AG04449 (cell line): ENCODE measurements at regions of chr11 and their contacts with region 1.

Region 1: DNA sequence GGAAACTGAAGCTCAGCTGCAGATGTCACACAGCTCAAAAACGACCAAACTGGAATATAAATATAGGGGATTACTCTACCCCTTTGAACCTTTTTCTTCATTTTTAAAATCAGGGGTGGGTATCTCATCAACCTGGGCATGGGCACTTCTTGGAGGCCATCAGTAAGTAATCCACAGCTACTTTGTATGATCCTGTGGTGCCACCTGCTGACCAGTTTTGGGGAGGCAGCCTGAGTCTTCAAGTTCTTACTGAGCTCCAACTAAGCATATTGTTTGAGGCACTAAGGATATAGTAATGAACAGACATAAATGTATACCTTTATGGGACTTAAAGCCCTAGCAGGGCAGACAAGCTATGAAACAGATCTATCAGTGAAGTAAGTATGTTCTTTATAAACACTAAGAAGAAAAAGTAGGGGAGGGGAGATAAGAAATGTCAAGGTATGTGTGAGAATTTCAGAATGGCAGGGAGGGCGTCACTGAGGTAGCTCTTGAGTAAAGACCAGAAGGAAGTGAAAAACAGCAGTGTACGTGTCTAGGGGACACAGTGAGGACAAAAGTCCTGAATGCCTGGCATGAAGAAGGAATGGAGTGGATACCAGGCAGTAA is 18.4 kb downstream of the TUB start:
- DNase-seq: peak; percentile 46
- H3K4me3 ChIP-seq: no peak overlapping the region
- CTCF ChIP-seq: peak; percentile 88

Region 2: GRCh38 chr11:7892840-7893254 is 206.5 kb before region 1 on chr11:
- CTCF ChIA-PET with region 1: interaction called, 45 read pairs
- POLR2A ChIA-PET with region 1: no interaction called
- DNase-seq: peak; percentile 28
- H3K4me3 ChIP-seq: no peak overlapping the region
- CTCF ChIP-seq: peak; percentile 56

Region 3: DNA sequence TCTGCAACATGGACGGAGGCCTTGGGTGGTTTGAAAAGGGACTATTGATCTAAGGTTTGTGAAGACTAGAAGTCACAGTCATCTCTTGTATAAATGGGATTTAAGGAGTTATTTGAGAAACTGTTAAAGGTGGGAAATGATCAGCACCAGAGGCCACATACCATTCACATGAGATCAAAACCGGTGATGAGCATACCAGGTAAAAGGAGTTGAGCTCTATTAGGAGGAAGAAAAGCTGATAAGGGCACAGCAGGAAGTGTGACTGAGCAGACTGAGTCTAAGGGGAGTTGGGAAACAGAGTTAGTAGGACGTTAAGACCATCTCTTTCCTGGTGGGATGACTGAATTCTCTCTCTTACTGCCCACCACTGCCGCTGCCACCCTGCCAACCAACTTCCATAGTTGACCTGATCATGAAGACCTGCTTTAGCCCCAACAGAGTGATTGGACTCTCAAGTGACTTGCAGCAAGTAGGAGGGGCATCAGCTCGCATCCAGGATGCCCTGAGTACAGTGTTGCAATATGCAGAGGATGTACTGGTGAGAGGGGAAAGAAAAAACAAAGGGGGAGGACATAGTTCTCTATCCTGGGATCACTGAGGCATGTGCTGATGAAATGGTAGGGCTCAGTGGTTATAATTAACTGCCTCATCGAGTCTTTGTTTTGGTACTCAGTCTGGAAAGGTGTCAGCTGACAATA is 104.7 kb before region 1 on chr11:
- CTCF ChIA-PET with region 1: interaction called, 1,552 read pairs
- POLR2A ChIA-PET with region 1: no interaction called
- DNase-seq: no peak
- H3K4me3 ChIP-seq: no peak overlapping the region
- CTCF ChIP-seq: no peak

Region 4: GRCh38 chr11:8025816-8026215 is 73.6 kb before region 1 on chr11:
- CTCF ChIA-PET with region 1: interaction called, 694 read pairs
- POLR2A ChIA-PET with region 1: no interaction called
- DNase-seq: peak; percentile 64
- H3K4me3 ChIP-seq: no peak overlapping the region
- CTCF ChIP-seq: no peak

Region 5: GRCh38 chr11:8056810-8057463 is 42.5 kb before region 1 on chr11:
- CTCF ChIA-PET with region 1: interaction called, 13 read pairs
- POLR2A ChIA-PET with region 1: no interaction called
- DNase-seq: peak; percentile 29
- H3K4me3 ChIP-seq: no peak overlapping the region
- CTCF ChIP-seq: no peak

Region 6: DNA sequence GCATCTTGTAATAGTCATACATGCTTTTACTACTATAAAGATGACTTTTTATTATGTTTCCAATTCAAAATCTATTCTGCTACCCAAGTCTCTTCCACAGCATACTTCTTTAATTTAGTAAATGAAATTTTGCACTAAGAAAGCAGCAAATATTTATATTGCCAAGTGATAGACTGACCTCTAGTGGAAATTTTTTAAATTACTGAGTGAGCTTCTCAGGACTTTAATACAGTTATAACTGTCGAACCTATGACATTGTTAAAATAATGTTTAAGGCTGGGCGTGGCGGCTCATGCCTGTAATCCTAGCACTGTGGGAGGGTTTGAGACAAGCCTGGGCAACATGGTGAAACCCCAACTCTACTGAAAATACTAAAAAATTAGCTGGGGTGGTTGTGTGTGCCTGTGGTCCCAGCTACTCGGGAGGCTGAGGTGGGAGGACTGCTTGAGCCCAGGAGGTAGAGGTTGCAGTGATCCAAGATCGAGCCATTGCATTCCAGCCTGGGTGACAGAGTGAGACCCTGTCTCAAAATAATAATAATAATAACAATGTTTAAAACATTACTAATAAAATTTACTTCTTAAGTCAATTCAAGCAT is 467.3 kb after region 1 on chr11:
- CTCF ChIA-PET with region 1: interaction called, 18 read pairs
- POLR2A ChIA-PET with region 1: no interaction called
- DNase-seq: no peak
- H3K4me3 ChIP-seq: no peak overlapping the region
- CTCF ChIP-seq: peak; percentile 18